CD4-positive, alpha-beta T cell (primary cell): ENCODE measurements at regions of chr22 and their contacts with region 1.

Region 1: GRCh38 chr22:36387752-36388518 is at the start of gene MYH9:
- DNase-seq: peak; percentile 96 to 100 (median 98)
- ATAC-seq: peak; percentile 73
- H3K4me3 ChIP-seq: peak within 1 kb of the TSS; percentile 98
- H3K4me3 Mint-ChIP-seq: peak within 1 kb of the TSS; percentile 96
- H3K27ac ChIP-seq: peak within 1 kb of the TSS; percentile 78 to 91
- H3K27ac Mint-ChIP-seq: peak within 1 kb of the TSS; percentile 93
- H3K4me1 ChIP-seq: peaks cover 36% of the 10 kb centered on the region
- H3K4me1 Mint-ChIP-seq: peaks cover 49% of the 10 kb centered on the region
- H3K27me3 ChIP-seq: no peaks in the 10 kb centered on the region
- H3K27me3 Mint-ChIP-seq: no peaks in the 10 kb centered on the region
- CTCF ChIP-seq: no peak
- total RNA-seq, gene MYH9: 901 to 925 TPM

Region 2: GRCh38 chr22:36365020-36365411 is 22.9 kb before region 1 on chr22:
- CTCF ChIA-PET with region 1: interaction called, 8 read pairs
- POLR2A ChIA-PET with region 1: interaction called, 1,847 read pairs
- intact Hi-C with region 1: loop called (anchors 1 to 2 kb)
- DNase-seq: peak; percentile 73 to 96 (median 84)
- ATAC-seq: peak; percentile 90
- H3K4me3 ChIP-seq: no peak overlapping the region
- H3K4me3 Mint-ChIP-seq: peak overlapping the region; percentile 81
- H3K27ac ChIP-seq: peak overlapping the region; percentile 84 to 91
- H3K27ac Mint-ChIP-seq: peak overlapping the region; percentile 93
- H3K4me1 ChIP-seq: peaks cover 99% of the 10 kb centered on the region
- H3K4me1 Mint-ChIP-seq: peaks cover 96% of the 10 kb centered on the region
- H3K27me3 ChIP-seq: no peaks in the 10 kb centered on the region
- H3K27me3 Mint-ChIP-seq: no peaks in the 10 kb centered on the region
- CTCF ChIP-seq: no peak

Region 3: DNA sequence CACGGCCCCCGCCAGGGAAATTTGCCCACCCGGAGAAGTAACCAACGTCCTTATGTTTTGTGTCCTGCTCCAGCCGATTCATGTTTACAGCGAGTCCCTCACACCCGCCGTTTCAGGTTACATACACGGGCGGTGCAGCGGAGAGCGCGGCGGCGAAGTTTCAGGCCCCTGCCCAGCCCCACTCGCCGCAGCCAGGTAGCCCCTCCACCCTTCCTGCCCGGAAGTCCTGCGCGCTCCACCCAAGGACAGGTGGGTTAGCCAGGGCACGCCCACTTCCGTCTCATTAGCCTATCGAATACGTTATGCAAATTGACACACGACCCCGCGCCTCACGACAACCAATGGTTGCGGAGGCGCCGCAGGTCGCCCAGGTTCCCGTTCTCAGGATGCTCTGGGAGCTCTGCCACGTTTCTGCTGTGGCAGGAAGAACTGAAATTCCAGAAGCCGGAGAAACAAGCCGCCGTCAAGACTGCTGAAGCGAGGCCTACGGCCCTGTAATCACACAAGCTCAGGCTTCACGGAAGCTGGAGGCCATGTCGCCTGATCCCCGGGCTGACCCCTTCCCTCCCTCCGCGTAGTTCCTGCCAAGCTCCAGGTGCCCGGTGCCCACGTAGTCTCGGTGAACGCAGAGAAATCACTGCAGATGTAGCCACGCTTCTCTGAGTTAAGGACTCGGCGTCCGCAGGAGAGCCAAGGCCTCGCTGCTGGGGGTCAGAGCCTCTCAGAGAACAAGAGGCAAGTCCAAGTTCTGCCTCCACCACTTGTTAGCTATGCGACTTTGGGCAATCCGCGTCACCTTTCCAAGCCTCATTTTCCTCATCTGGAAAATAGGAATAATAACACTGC is 22.2 kb after region 1 on chr22:
- CTCF ChIA-PET with region 1: interaction called, 4 read pairs
- POLR2A ChIA-PET with region 1: interaction called, 33 read pairs
- intact Hi-C with region 1: no loop called
- DNase-seq: peak; percentile 32 to 89 (median 66)
- ATAC-seq: peak; percentile 81
- H3K4me3 ChIP-seq: peak overlapping the region; percentile 34
- H3K4me3 Mint-ChIP-seq: peak overlapping the region; percentile 40
- H3K27ac ChIP-seq: peak overlapping the region; percentile 44 to 63
- H3K27ac Mint-ChIP-seq: peak overlapping the region; percentile 74
- H3K4me1 ChIP-seq: peaks cover 66% of the 10 kb centered on the region
- H3K4me1 Mint-ChIP-seq: peaks cover 63% of the 10 kb centered on the region
- H3K27me3 ChIP-seq: no peaks in the 10 kb centered on the region
- H3K27me3 Mint-ChIP-seq: no peaks in the 10 kb centered on the region
- CTCF ChIP-seq: no peak

Region 4: GRCh38 chr22:36454916-36455570 is 67.1 kb after region 1 on chr22:
- CTCF ChIA-PET with region 1: interaction called, 4 read pairs
- POLR2A ChIA-PET with region 1: interaction called, 29 read pairs
- intact Hi-C with region 1: loop called (anchors 1 kb)
- DNase-seq: peak; percentile 86 to 98 (median 96)
- ATAC-seq: peak; percentile 70
- H3K4me3 ChIP-seq: peak overlapping the region; percentile 76
- H3K4me3 Mint-ChIP-seq: peak overlapping the region; percentile 84
- H3K27ac ChIP-seq: peak overlapping the region; percentile 89 to 92
- H3K27ac Mint-ChIP-seq: peak overlapping the region; percentile 93
- H3K4me1 ChIP-seq: peaks cover 61% of the 10 kb centered on the region
- H3K4me1 Mint-ChIP-seq: peaks cover 46% of the 10 kb centered on the region
- H3K27me3 ChIP-seq: no peaks in the 10 kb centered on the region
- H3K27me3 Mint-ChIP-seq: no peaks in the 10 kb centered on the region
- CTCF ChIP-seq: no peak

Region 5: GRCh38 chr22:36481393-36482168 is 93.6 kb after region 1 on chr22 and contains the start of gene TXN2:
- CTCF ChIA-PET with region 1: interaction called, 3 read pairs
- POLR2A ChIA-PET with region 1: interaction called, 11 read pairs
- intact Hi-C with region 1: no loop called
- DNase-seq: peak; percentile 92 to 98 (median 96)
- ATAC-seq: peak; percentile 87
- H3K4me3 ChIP-seq: peak within 1 kb of the TSS; percentile 67
- H3K4me3 Mint-ChIP-seq: peak within 1 kb of the TSS; percentile 95
- H3K27ac ChIP-seq: peak within 1 kb of the TSS; percentile 94 to 99
- H3K27ac Mint-ChIP-seq: peak within 1 kb of the TSS; percentile 92
- H3K4me1 ChIP-seq: peaks cover 22% of the 10 kb centered on the region
- H3K4me1 Mint-ChIP-seq: peaks cover 22% of the 10 kb centered on the region
- H3K27me3 ChIP-seq: no peaks in the 10 kb centered on the region
- H3K27me3 Mint-ChIP-seq: no peaks in the 10 kb centered on the region
- CTCF ChIP-seq: no peak
- total RNA-seq, gene TXN2: 26.4 to 26.5 TPM

Region 6: DNA sequence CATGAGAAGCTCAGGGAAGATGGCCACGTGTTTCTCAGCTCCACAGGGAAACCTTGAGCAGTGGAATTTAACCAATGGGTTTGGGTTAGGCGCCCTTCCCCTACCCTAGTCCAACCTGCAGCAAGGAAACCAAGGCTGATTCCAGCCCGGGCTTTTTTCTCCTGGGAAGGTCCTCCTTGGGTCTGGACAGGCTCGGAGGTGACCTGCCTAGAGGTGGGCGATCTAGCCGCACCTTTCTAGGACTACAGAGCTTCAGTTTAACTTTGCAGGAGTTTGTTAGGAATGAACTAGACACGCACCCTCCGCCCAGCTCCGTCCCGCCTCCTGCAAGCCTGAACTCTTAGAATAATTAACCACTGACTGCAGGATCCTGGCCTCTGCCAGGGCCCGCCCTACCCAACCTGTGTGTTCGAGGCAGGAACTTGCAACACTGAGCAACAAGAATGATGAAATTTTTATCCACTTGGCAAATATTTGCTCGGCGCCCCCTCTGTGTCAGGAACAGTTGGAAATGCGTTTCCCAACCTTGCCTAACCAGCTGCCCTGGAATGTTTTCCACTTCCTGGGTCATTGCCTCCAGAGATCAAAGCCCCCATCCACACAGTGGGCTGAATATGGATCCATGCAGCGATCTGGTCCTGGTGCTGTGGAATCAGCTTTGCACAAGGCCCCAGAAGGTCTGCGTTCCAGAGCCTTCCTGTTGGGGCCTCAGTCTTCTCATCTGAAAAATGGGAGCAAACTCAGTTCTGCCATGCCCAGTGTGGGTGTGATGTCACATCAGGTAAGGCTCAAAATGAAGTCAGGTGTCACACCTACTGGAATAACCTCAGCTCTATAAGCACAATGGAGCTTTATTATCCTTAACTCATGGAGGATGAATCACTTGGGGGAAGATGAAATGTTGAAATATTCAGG is 644.9 kb after region 1 on chr22:
- CTCF ChIA-PET with region 1: no interaction called
- POLR2A ChIA-PET with region 1: no interaction called
- intact Hi-C with region 1: no loop called
- DNase-seq: no peak
- ATAC-seq: no peak
- H3K4me3 ChIP-seq: no peak overlapping the region
- H3K4me3 Mint-ChIP-seq: no peak overlapping the region
- H3K27ac ChIP-seq: no peak overlapping the region
- H3K27ac Mint-ChIP-seq: no peak overlapping the region
- H3K4me1 ChIP-seq: no peaks in the 10 kb centered on the region
- H3K4me1 Mint-ChIP-seq: no peaks in the 10 kb centered on the region
- H3K27me3 ChIP-seq: peaks cover 0 to 4% of the 10 kb centered on the region in 2 experiments
- H3K27me3 Mint-ChIP-seq: peaks cover 18% of the 10 kb centered on the region
- CTCF ChIP-seq: no peak